ENCODE measurements at regions of chr7 and their contacts with region 1.

Region 1: DNA sequence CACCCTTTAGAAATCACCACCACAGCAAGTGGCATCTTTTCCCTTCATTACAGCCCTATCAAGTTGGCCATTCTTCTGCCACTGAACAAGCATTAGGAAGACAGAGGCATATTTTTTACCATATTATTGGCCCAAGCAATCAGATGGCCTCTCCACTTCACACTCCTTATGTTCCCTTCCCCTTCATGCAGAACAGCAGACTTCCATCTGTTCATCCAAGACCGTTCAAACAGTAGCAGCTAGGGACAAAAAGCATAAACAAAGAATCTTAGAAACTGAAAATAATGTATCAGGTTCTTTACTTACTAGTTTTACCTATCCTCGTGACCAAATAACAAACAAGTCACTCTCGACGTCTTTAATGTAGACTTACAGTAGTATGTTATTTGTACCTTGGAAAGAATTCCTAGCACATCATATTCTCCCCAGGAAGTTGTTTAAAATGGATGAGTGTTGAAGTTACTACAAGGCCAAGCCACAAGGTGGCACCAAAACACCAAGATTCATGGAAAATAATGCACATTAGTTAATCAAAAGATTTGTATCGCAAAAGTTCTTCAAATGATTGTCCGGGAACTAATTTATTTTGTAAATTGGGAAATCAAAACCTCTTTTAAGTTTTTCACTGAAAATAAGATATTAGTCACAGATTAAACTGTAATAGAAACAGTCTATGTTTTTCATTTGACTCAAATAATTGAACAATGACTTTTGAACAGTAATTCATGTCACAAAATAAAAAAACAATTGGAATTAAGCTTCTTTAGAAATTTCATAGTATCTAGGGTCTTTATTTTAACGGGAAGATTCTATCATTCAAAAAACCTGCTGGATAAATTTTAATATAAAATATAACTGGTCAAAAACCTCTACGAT is 112.1 kb downstream of the VPS41 start:
- DNase-seq: peak in 1 of 2 donors; percentile 50
- ATAC-seq: no peak
- H3K4me3 ChIP-seq: no peak overlapping the region
- H3K27ac ChIP-seq: no peak overlapping the region
- H3K4me1 ChIP-seq: no peaks in the 10 kb centered on the region
- H3K27me3 ChIP-seq: no peaks in the 10 kb centered on the region

Region 2: DNA sequence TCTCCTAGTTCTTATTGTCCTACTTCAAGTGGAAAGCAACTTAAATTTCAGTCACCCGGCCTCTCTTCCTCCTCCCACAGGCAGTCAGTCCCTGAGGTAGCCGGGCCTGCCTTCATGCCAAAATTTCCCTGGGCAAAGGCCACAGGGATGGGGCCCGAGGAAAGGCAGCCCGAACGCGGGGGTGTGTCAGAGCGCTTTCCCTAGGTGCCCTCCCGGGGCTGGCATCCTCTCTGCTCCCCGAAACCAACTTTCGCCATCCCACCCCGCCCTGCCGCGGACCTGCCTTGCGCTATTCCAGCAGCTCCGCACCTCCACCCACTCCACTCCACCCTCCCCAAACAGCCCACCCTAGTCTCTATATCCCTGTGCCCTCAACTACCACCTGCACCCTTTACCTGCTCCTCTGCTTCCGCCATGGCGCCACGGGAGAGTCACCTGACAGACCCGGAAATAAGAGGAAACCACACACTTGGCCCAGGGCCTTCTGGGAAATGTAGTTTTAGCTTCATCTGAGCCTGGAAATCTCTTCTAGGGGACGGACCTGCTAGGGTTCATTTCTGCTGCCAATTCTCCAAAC is 112.0 kb after region 1 on chr7 and contains the start of gene VPS41:
- intact Hi-C with region 1: loop called in 1 of 2 experiments (anchors 10 kb)
- DNase-seq: peak; percentile 83
- ATAC-seq: peak; percentile 90
- H3K4me3 ChIP-seq: peak within 1 kb of the TSS; percentile 64 to 81
- H3K27ac ChIP-seq: no peak within 1 kb of the TSS
- H3K4me1 ChIP-seq: no peaks in the 10 kb centered on the region
- H3K27me3 ChIP-seq: no peaks in the 10 kb centered on the region
- total RNA-seq, gene VPS41: 77.0 to 92.3 TPM

Region 3: DNA sequence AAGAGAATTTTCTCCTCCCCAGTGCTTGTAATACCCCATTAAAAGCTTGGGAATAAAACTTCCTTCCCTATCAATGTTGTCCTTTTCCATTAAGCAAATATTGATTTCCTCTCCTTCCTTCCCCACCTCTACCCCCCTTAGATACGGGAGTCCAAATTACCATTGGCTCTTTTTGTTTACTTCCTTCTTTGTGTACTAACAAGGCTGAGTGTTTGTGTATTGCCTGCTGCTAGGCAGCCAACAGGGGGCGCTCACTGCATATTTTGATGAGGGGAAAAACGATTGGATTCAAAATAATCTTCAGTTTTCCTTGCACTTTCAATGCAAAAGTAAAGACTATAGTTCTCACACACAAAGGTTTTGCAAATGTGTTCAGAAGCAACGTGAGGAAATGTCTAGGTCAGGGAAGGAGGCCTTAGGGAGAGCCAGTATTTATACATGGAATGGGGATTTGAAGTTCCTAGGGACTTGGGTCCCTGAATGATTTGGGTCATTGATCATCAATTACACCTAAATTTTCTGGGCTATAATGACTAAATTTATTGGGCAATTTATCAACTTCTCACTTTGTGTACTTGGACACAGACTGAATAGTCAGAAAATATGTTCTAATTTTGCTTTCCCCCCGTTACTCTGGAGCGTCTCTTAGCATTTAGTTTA is 135.8 kb after region 1 on chr7:
- intact Hi-C with region 1: loop called (anchors 5 to 10 kb)
- DNase-seq: peak; percentile 78 to 93
- ATAC-seq: peak; percentile 44
- H3K4me3 ChIP-seq: no peak overlapping the region
- H3K27ac ChIP-seq: no peak overlapping the region
- H3K4me1 ChIP-seq: peaks cover 0 to 2% of the 10 kb centered on the region in 2 donors
- H3K27me3 ChIP-seq: no peaks in the 10 kb centered on the region

Region 4: DNA sequence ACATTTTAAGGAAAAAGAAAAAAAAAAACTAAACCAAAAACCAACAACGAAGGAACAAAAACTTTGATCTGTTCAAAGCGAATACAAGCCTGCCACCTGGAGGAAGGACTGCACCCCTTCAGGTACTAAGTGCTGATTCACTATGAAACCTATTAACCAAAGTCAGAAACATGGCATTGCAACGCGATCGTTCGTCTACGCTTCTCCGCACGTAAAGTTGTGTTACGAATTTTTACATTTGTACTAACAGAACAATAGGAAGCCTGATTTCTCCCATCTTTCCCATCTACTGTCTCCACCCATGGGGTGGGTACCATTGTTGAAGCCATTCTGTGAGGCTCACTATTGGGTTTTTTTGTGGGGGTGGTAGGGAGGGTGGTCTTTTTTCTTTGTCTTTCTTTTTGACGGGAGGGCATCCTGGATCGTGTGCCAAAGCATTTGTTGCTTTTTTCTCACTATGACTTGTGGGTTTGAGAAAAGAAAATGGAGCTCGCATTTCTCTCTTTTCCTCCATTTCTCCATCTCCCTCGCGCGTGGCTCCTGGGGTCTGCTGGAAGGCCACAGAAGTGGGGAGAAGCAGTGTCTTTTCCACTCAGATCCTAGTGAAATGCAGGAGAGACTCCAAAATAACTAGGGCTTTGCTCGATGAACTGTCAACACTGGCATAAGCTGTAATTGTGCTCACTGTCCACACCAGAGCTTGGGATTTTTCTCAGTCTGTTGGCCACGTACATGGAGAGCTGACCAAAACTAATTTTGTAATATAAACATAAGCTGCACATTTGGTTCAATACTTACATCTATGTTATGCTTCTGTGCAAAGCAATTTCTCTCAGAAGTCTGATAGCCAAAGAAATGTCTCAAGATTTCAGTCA is 668.4 kb after region 1 on chr7:
- intact Hi-C with region 1: loop called (anchors 2 kb)
- DNase-seq: peak in 1 of 2 donors; percentile 56
- ATAC-seq: peak; percentile 70
- H3K4me3 ChIP-seq: peak overlapping the region in 1 of 2 donors; percentile 34
- H3K27ac ChIP-seq: no peak overlapping the region
- H3K4me1 ChIP-seq: no peaks in the 10 kb centered on the region
- H3K27me3 ChIP-seq: no peaks in the 10 kb centered on the region

Region 5: GRCh38 chr7:39517240-39517639 is 720.4 kb after region 1 on chr7:
- intact Hi-C with region 1: loop called (anchors 2 to 5 kb)
- DNase-seq: no peak
- ATAC-seq: no peak
- H3K4me3 ChIP-seq: no peak overlapping the region
- H3K27ac ChIP-seq: no peak overlapping the region
- H3K4me1 ChIP-seq: no peaks in the 10 kb centered on the region
- H3K27me3 ChIP-seq: no peaks in the 10 kb centered on the region

Measured in aorta (tissue), 5 donors.